Right ventricle myocardium superior (tissue), 1 donor: ENCODE measurements at regions of chr5 and their contacts with region 1.

Region 1: DNA sequence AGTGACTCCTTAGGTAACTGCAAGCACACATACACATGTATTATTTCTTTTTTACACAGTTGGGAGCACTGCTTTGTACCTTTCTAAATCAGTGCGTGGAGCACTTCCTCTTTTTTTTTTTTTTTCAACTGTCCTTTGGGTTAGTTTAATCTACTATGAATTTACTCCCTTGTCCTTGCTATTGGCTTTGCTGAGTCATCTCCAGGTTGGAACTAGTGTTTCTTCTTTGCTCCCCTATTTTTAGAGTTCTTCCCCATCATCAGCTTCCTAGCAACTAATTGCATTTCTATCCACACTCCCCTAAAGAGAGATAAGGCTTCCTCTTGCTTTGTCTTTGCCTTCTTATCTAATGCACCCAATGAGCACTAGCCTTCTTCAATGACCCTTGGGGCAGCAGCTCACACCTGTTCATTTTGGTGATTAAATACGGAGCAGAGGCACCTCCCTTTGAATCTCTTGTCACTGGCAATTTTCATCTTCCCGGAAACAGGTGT is 24.3 kb downstream of the S100Z start:
- DNase-seq: no peak
- ATAC-seq: no peak

Region 2: GRCh38 chr5:76908166-76908565 is 34.0 kb after region 1 on chr5:
- intact Hi-C with region 1: no loop called
- DNase-seq: no peak
- ATAC-seq: no peak

Region 3: GRCh38 chr5:77015938-77016569 is 141.9 kb after region 1 on chr5:
- intact Hi-C with region 1: loop called (anchors 5 kb)
- DNase-seq: no peak
- ATAC-seq: no peak